Panc1 (cell line): ENCODE measurements at regions of chr13 and their contacts with region 1.

Region 1: GRCh38 chr13:27510082-27510481 is 59.7 kb upstream of the MTIF3 start:
- DNase-seq: no peak
- ATAC-seq: no peak
- H3K4me3 ChIP-seq: no peak overlapping the region
- H3K27ac ChIP-seq: no peak overlapping the region
- H3K4me1 ChIP-seq: no peaks in the 10 kb centered on the region
- H3K27me3 ChIP-seq: no peaks in the 10 kb centered on the region
- CTCF ChIP-seq: no peak

Region 2: GRCh38 chr13:27211771-27212364 is 298.2 kb before region 1 on chr13:
- CTCF ChIA-PET with region 1: no interaction called
- POLR2A ChIA-PET with region 1: no interaction called
- in situ Hi-C with region 1: no loop called
- intact Hi-C with region 1: no loop called
- DNase-seq: no peak
- ATAC-seq: peak; percentile 72; the same call in 1 of the 2 replicates
- H3K4me3 ChIP-seq: no peak overlapping the region
- H3K27ac ChIP-seq: no peak overlapping the region
- H3K4me1 ChIP-seq: no peaks in the 10 kb centered on the region
- H3K27me3 ChIP-seq: no peaks in the 10 kb centered on the region
- CTCF ChIP-seq: no peak

Region 3: DNA sequence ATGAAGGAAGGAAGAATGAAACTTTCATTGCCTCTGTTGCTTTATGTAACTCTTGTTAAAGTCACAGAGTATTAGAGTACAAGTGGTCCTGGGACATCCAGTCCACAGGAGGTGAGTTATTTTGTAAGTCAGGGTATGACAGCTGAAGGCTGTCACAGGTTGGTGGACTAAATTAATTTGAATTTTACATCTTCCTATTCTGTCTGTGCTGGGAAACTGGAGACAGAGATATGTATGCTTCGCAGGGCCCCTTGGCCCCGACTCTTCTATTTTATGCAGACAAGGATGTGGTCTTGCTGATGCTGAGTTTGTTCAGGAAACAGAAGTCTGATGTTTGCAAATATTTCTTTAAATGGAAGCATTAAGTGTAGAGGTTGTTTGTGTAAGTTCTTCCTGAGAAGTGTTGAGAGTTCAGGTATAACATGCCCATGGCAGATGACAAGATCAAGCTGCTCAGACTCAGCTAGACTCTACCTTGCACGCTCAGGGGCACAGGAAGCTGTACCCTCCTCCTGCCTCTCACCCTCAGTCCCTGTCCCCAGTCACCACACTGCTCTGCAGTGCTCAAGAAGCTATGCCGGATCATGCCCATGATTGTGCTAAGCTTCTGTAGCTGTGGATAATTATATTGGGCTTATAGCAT is 216.1 kb before region 1 on chr13:
- CTCF ChIA-PET with region 1: no interaction called
- POLR2A ChIA-PET with region 1: no interaction called
- in situ Hi-C with region 1: no loop called
- intact Hi-C with region 1: no loop called
- DNase-seq: no peak
- ATAC-seq: no peak
- H3K4me3 ChIP-seq: no peak overlapping the region
- H3K27ac ChIP-seq: no peak overlapping the region
- H3K4me1 ChIP-seq: no peaks in the 10 kb centered on the region
- H3K27me3 ChIP-seq: no peaks in the 10 kb centered on the region
- CTCF ChIP-seq: no peak

Region 4: GRCh38 chr13:27379694-27380641 is 130.1 kb before region 1 on chr13:
- CTCF ChIA-PET with region 1: no interaction called
- POLR2A ChIA-PET with region 1: no interaction called
- in situ Hi-C with region 1: no loop called
- intact Hi-C with region 1: loop called (anchors 10 kb)
- DNase-seq: no peak
- ATAC-seq: peak; percentile 77
- H3K4me3 ChIP-seq: no peak overlapping the region
- H3K27ac ChIP-seq: no peak overlapping the region
- H3K4me1 ChIP-seq: no peaks in the 10 kb centered on the region; the same call in 1 of the 2 replicates
- H3K27me3 ChIP-seq: no peaks in the 10 kb centered on the region
- CTCF ChIP-seq: peak; percentile 80

Region 5: GRCh38 chr13:27406178-27406939 is 103.7 kb before region 1 on chr13:
- CTCF ChIA-PET with region 1: no interaction called
- POLR2A ChIA-PET with region 1: no interaction called
- in situ Hi-C with region 1: no loop called
- intact Hi-C with region 1: no loop called
- DNase-seq: no peak
- ATAC-seq: peak; percentile 75
- H3K4me3 ChIP-seq: 0 out of 4 replicates have a peak overlapping the region, but pooled peaks of 1 of the 2 experiments have one; percentile 6
- H3K27ac ChIP-seq: no peak overlapping the region
- H3K4me1 ChIP-seq: peaks cover 5% of the 10 kb centered on the region; the same call in 1 of the 2 replicates
- H3K27me3 ChIP-seq: no peaks in the 10 kb centered on the region
- CTCF ChIP-seq: peak; percentile 71